ENCODE measurements at regions of chr11 and their contacts with region 1.

Region 1: DNA sequence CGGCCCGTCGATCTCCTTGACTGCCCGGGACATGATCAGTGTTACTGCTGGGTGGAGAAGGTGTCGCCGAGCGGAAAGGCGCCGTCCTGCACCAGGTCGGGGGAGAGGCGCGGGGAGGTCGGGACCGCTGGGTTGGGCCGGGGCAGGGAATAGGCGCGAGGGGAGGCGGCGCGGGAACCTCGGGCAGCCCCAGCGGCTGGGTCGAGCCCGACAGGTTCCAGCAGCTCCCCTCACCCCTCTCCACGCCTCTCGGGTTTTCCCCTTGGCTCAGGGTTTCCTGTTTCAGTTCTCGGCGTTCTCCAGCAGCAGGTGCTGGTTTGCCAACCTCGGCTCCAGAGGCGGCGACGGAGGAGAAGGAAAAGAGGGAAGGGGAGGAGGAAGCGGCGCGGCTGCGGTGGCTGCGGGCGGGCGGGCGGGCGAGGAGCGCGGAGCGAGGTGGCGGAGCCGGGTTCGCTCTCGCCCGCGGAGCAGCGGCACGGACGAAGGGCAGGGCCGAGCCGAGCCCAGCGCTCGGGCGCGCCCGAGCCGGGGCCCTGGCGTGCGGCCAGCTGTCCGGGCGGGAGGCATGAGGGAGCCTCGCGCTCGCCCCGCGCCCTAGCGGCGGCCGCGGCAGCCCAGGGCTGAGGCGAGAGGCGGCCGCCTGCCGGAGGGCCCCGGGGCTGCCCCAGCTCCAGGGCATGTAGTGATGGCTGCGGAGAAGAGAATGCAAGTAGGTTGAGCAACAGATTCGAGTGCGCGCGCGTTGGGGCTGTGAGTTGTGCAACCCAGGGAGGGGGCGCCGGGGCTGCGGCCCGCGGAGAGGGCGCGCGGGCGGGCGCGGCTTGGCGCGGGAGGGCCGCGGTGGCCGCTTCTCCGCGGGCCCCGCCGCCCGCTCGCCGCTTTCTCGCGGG is at the start of gene ZC3H12C:
- DNase-seq: peak; percentile 96
- ATAC-seq: peak; percentile 66
- H3K4me3 ChIP-seq: peak within 1 kb of the TSS; percentile 83
- H3K27ac ChIP-seq: peak within 1 kb of the TSS; percentile 95
- H3K4me1 ChIP-seq: peaks cover 42% of the 10 kb centered on the region
- H3K27me3 ChIP-seq: no peaks in the 10 kb centered on the region
- CTCF ChIP-seq: no peak
- total RNA-seq, gene ZC3H12C: 25.2 and 30.7 TPM in 2 replicates

Region 2: GRCh38 chr11:109939166-109939810 is 153.5 kb before region 1 on chr11:
- CTCF ChIA-PET with region 1: interaction called, 6 read pairs
- POLR2A ChIA-PET with region 1: interaction called, 13 read pairs
- intact Hi-C with region 1: no loop called
- DNase-seq: peak; percentile 94
- ATAC-seq: peak; percentile 68
- H3K4me3 ChIP-seq: no peak overlapping the region
- H3K27ac ChIP-seq: peak overlapping the region; percentile 85
- H3K4me1 ChIP-seq: peaks cover 22% of the 10 kb centered on the region
- H3K27me3 ChIP-seq: no peaks in the 10 kb centered on the region
- CTCF ChIP-seq: peak; percentile 97

Region 3: DNA sequence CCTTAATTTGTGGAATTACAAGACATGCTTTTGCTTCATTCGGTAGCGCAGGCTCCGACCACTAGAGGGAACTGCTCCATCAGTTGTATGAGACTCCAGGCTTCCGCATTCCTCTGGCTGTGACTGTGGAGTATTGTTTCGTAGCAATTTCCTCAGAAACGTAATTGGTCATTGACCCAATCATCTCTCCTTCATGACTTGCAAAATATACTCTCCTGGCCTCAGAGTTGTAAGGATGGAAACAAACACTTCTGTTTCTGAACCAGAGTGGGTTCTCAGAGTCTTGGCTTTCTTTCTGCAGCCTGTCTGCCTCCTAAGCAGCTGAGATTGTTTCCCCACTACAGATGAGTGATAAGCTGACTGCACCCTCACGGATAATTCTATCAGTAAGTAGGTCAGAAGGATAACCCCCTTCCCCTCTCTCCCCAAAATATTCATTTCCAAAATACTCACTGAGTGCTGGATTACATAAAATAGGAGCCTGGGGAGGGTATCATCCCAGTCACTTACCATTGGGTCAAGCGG is 146.4 kb before region 1 on chr11:
- CTCF ChIA-PET with region 1: interaction called, 3 read pairs
- POLR2A ChIA-PET with region 1: interaction called, 13 read pairs
- intact Hi-C with region 1: loop called (anchors 1 kb)
- DNase-seq: peak; percentile 98
- ATAC-seq: peak; percentile 95
- H3K4me3 ChIP-seq: peak overlapping the region; percentile 53; the same call in 1 of the 2 replicates
- H3K27ac ChIP-seq: peak overlapping the region; percentile 80
- H3K4me1 ChIP-seq: peaks cover 20% of the 10 kb centered on the region
- H3K27me3 ChIP-seq: no peaks in the 10 kb centered on the region
- CTCF ChIP-seq: peak; percentile 99

Region 4: GRCh38 chr11:110000031-110000502 is 92.7 kb before region 1 on chr11:
- CTCF ChIA-PET with region 1: no interaction called
- POLR2A ChIA-PET with region 1: interaction called, 4 read pairs
- intact Hi-C with region 1: loop called (anchors 1 kb)
- DNase-seq: peak; percentile 93
- ATAC-seq: peak; percentile 99
- H3K4me3 ChIP-seq: no peak overlapping the region
- H3K27ac ChIP-seq: peak overlapping the region; percentile 86
- H3K4me1 ChIP-seq: peaks cover 33% of the 10 kb centered on the region
- H3K27me3 ChIP-seq: no peaks in the 10 kb centered on the region
- CTCF ChIP-seq: no peak

Region 5: GRCh38 chr11:110026858-110027626 is 65.7 kb before region 1 on chr11:
- CTCF ChIA-PET with region 1: no interaction called
- POLR2A ChIA-PET with region 1: no interaction called
- intact Hi-C with region 1: no loop called
- DNase-seq: no peak
- ATAC-seq: no peak
- H3K4me3 ChIP-seq: no peak overlapping the region
- H3K27ac ChIP-seq: no peak overlapping the region
- H3K4me1 ChIP-seq: peaks cover 8% of the 10 kb centered on the region
- H3K27me3 ChIP-seq: no peaks in the 10 kb centered on the region
- CTCF ChIP-seq: no peak

Region 6: GRCh38 chr11:110069158-110069737 is 23.5 kb before region 1 on chr11:
- CTCF ChIA-PET with region 1: no interaction called
- POLR2A ChIA-PET with region 1: interaction called, 16 read pairs
- intact Hi-C with region 1: loop called (anchors 1 kb)
- DNase-seq: peak; percentile 100
- ATAC-seq: peak; percentile 88
- H3K4me3 ChIP-seq: no peak overlapping the region
- H3K27ac ChIP-seq: peak overlapping the region; percentile 93
- H3K4me1 ChIP-seq: peaks cover 53% of the 10 kb centered on the region
- H3K27me3 ChIP-seq: no peaks in the 10 kb centered on the region
- CTCF ChIP-seq: no peak

Region 7: DNA sequence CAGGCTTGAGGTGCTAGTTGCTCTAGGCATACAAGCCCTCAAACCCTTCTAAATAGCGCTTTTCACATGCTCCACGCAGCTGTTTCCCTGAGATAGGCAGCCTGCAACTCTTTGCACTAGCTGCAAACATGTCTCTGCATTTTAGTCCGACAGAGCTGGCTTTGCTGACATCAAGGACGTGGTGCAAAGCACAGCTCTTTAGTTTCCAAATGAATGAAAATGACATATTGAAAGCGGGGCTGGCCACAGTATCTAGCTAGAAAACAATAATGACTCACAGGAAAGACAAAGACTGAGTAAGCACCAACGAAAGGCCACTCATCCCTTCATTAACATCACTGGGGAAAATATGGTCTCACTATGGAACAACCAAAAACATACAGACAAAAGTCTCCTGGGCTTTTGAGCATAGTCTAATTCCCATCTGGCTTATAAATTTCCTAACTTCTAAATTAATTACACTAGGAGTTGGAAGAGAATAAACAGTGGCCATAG is 14.9 kb before region 1 on chr11:
- CTCF ChIA-PET with region 1: interaction called, 9 read pairs
- POLR2A ChIA-PET with region 1: interaction called, 41 read pairs
- intact Hi-C with region 1: loop called (anchors 1 kb)
- DNase-seq: peak; percentile 92
- ATAC-seq: peak; percentile 54
- H3K4me3 ChIP-seq: peak overlapping the region; percentile 27; the same call in 1 of the 2 replicates
- H3K27ac ChIP-seq: peak overlapping the region; percentile 95
- H3K4me1 ChIP-seq: peaks cover 34% of the 10 kb centered on the region
- H3K27me3 ChIP-seq: no peaks in the 10 kb centered on the region
- CTCF ChIP-seq: no peak

Region 8: GRCh38 chr11:110160016-110160415 is 67.3 kb after region 1 on chr11:
- CTCF ChIA-PET with region 1: no interaction called
- POLR2A ChIA-PET with region 1: no interaction called
- intact Hi-C with region 1: no loop called
- DNase-seq: peak; percentile 37
- ATAC-seq: peak; percentile 80
- H3K4me3 ChIP-seq: no peak overlapping the region
- H3K27ac ChIP-seq: 0 out of 2 replicates have a peak overlapping the region, but pooled peaks have one; percentile 0
- H3K4me1 ChIP-seq: no peaks in the 10 kb centered on the region
- H3K27me3 ChIP-seq: no peaks in the 10 kb centered on the region
- CTCF ChIP-seq: no peak

Measured in PC-3 (cell line).